ENCODE measurements at regions of chr5 and their contacts with region 1.

Region 1: GRCh38 chr5:153964880-153965645 is 73.6 kb downstream of the FAM114A2 start:
- DNase-seq: peak in 1 of 2 donors; percentile 80
- ATAC-seq: peak; percentile 81
- H3K4me3 ChIP-seq: no peak overlapping the region
- H3K27ac ChIP-seq: no peak overlapping the region
- H3K4me1 ChIP-seq: no peaks in the 10 kb centered on the region
- H3K27me3 ChIP-seq: no peaks in the 10 kb centered on the region

Region 2: DNA sequence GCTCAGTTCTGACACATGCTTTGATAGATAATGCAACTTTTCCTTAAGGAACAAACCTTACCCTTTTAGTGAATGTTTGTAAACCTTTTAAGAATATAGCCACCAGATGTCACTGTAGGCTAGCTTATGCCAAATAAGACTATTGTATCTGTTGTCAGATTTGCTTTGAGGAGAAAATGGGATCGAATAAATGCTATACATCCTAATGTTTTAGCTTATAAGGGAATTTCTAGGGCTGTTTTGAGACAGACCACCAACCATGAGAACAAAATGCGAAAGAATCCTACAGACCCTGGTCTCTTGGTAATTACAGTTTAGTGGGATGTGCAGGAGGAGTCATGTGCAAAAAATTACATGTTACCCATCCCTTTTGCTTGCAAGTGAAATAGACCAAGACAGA is 1432.3 kb before region 1 on chr5:
- intact Hi-C with region 1: loop called (anchors 2 kb)
- DNase-seq: no peak
- ATAC-seq: no peak
- H3K4me3 ChIP-seq: no peak overlapping the region
- H3K27ac ChIP-seq: no peak overlapping the region
- H3K4me1 ChIP-seq: no peaks in the 10 kb centered on the region
- H3K27me3 ChIP-seq: no peaks in the 10 kb centered on the region

Region 3: GRCh38 chr5:152560512-152561137 is 1404.4 kb before region 1 on chr5:
- intact Hi-C with region 1: loop called in 1 of 2 experiments (anchors 10 kb)
- DNase-seq: peak; percentile 65 to 85
- ATAC-seq: no peak
- H3K4me3 ChIP-seq: no peak overlapping the region
- H3K27ac ChIP-seq: no peak overlapping the region
- H3K4me1 ChIP-seq: no peaks in the 10 kb centered on the region
- H3K27me3 ChIP-seq: no peaks in the 10 kb centered on the region

Region 4: DNA sequence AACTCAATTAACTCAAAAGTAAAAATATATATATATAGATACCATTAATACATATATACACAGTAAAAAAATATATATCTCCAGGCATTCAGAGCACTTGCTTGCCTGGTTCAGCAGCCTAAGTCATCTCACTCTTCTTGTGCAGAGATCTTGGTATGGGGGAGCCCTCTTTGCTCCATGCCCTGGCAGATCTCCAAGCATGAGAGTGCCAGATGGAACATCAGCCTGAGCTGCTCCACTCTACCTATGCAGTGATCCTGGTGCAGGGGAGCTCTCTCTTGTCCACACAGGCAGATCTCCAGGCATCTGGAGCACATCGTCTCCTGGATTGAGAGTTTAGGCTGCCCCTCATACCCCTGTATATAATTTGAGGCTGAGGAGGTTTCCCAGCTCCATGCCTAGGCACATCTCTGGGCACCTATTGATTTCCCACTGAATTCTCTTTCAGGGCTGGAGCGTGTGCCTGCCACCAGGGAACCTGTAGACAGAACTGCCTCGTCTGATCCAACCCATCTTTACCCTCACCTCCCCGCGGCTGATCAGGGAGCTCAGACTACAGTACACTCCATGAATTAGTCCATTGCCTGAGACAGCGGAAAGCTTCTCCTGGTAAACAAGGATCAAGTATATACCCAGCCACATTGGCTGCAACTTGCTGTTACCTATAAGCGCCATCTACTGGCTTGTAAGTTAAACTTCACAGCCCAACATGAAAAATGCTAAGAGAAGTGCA is 817.0 kb before region 1 on chr5:
- intact Hi-C with region 1: loop called in 1 of 2 experiments (anchors 2 kb)
- DNase-seq: peak in 1 of 2 donors; percentile 21
- ATAC-seq: peak; percentile 69
- H3K4me3 ChIP-seq: no peak overlapping the region
- H3K27ac ChIP-seq: no peak overlapping the region
- H3K4me1 ChIP-seq: no peaks in the 10 kb centered on the region
- H3K27me3 ChIP-seq: no peaks in the 10 kb centered on the region

Region 5: DNA sequence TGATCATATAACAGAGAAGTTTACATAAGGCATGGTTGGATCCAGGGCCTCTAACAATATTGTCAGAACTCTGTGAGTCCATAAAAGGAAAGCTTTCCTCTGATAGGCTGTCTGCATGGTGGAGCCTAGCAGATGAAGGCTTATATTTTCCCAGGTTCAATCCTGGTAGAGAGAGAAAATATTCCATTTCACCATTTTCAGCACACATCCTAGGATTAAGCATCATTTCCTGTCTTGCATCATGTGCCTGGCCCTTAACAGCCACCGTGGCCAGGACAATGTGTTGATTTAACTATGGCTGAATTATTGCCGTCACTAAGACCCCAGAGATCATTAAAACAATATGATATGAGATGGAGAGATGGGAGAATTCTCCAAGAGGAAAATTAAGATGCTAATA is 565.5 kb before region 1 on chr5:
- intact Hi-C with region 1: loop called in 1 of 2 experiments (anchors 10 kb)
- DNase-seq: no peak
- ATAC-seq: peak; percentile 33
- H3K4me3 ChIP-seq: no peak overlapping the region
- H3K27ac ChIP-seq: peak overlapping the region; percentile 57 to 59
- H3K4me1 ChIP-seq: peaks cover 0 to 10% of the 10 kb centered on the region in 2 donors
- H3K27me3 ChIP-seq: no peaks in the 10 kb centered on the region

Region 6: DNA sequence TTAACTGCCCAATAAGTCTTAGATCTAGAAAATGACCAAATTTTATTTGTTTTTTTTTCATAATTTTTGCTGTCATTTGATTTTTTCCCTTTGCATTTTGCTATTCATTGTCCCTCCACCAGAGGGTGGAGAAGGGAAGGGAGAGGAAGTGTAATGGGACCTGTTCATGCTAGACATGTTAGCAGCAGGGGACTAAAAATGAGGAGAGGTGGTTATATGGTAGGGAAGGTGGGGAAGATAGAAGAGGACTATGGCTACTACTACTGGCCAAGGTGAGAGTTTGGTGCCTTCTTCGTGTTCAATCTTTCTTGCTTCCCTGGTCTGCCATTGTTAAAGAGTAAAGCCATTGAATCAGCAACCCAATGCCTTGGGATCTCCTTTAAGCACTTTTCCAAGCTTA is 468.2 kb before region 1 on chr5:
- intact Hi-C with region 1: loop called (anchors 2 to 10 kb)
- DNase-seq: no peak
- ATAC-seq: no peak
- H3K4me3 ChIP-seq: no peak overlapping the region
- H3K27ac ChIP-seq: peak overlapping the region in 1 of 2 donors; percentile 28
- H3K4me1 ChIP-seq: no peaks in the 10 kb centered on the region
- H3K27me3 ChIP-seq: no peaks in the 10 kb centered on the region

Region 7: DNA sequence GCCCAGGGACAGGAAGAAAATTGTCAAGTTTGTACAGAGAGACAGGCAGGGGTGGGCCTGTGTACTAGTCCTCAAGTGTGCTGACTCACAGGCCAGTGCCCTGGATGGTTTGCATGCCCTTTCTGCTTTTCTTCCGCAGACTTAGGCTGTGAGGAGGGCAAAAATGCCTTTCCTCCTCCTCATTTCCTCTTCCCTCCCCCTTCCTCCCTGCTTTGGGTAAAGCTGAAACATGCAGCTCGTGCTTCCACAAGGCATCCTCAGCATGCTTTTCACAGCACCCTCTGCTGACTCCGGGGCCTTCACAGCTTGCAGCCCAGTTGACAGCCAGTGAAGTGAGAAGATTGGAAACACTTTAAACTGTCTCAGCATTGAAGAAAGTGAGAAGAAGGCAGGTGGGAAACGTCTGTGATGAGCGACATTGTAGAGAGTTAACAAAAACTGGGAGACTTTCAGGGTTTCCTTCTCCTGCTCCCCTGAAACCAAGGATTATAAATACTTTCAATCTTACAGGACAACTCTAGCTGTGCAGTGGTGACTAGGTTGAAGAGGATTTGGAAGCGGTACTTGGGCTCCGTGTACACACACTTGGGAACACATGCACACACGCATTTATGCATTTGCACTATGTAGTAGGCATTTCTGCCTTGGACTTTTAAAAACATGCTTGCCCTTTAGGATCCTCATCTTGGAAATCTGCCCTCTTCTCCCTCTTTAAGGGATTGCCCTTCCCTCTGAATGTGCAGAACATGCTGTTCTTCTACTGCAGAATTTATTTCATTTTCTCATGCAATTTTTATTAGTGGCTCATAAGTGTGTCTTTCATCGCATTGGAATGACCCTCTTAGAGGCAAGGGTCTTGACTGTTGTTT is 335.8 kb before region 1 on chr5:
- intact Hi-C with region 1: loop called in 1 of 2 experiments (anchors 10 kb)
- DNase-seq: peak; percentile 82 to 85
- ATAC-seq: peak; percentile 82
- H3K4me3 ChIP-seq: no peak overlapping the region
- H3K27ac ChIP-seq: peak overlapping the region in 1 of 2 donors; percentile 78
- H3K4me1 ChIP-seq: peaks cover 0 to 9% of the 10 kb centered on the region in 2 donors
- H3K27me3 ChIP-seq: no peaks in the 10 kb centered on the region